ENCODE measurements at regions of chr4 and their contacts with region 1.

Region 1: DNA sequence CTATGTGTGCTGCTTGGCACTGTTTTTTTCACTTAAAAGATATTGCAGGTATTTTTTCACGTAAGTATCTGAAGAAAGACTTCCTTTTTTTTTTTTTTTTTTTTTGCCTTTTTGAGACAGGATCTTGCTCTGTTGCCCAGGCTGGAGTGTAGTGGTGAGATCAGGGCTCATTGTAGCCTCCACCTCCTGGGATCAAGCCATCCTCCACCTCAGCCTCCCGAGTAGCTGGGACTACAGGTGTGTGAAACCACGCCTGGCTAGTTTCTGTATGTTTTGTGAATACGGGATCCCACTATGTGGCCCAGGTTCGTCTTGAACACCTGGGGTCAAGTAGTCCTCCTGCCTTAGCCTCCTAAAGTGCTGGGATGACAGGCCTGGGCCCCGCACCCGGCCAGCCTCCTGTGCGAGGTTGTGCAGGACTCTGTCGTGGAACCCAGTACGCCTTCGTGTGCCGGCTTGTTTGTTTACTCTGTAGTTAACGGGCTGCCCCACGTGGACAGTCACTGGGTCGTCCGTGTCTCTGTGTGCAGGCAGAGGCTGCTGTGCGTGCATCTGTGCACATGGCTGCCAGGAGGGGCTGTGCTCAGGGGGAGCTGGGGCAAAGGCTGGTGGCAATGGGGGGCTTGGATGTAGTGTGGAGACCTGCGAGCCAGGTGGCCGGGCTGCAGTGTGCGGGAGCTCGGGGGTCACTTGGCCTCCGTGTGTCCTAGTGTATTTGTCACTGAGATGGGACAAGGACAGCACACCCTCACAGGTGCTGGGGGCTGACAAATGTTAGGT is 179.5 kb downstream of the ADRA2C start:
- DNase-seq: no peak
- ATAC-seq: no peak
- H3K4me3 ChIP-seq: no peak overlapping the region
- H3K27ac ChIP-seq: no peak overlapping the region
- H3K4me1 ChIP-seq: peaks cover 0 to 8% of the 10 kb centered on the region in 2 experiments; a peak in 2 of 5 replicates
- H3K27me3 ChIP-seq: no peaks in the 10 kb centered on the region
- CTCF ChIP-seq: no peak
- EP300 ChIP-seq: no peak
- POLR2A ChIP-seq: no peak
- RAD21 ChIP-seq: no peak

Region 2: GRCh38 chr4:3077796-3078195 is 867.9 kb before region 1 on chr4:
- CTCF ChIA-PET with region 1: no interaction called
- POLR2A ChIA-PET with region 1: no interaction called
- in situ Hi-C with region 1: no loop called
- intact Hi-C with region 1: no loop called
- DNase-seq: no peak
- ATAC-seq: no peak
- H3K4me3 ChIP-seq: no peak overlapping the region
- H3K27ac ChIP-seq: no peak overlapping the region
- H3K4me1 ChIP-seq: peaks cover 28 to 32% of the 10 kb centered on the region in 2 experiments
- H3K27me3 ChIP-seq: no peaks in the 10 kb centered on the region
- CTCF ChIP-seq: no peak
- EP300 ChIP-seq: no peak
- POLR2A ChIP-seq: no peak
- RAD21 ChIP-seq: no peak

Region 3: DNA sequence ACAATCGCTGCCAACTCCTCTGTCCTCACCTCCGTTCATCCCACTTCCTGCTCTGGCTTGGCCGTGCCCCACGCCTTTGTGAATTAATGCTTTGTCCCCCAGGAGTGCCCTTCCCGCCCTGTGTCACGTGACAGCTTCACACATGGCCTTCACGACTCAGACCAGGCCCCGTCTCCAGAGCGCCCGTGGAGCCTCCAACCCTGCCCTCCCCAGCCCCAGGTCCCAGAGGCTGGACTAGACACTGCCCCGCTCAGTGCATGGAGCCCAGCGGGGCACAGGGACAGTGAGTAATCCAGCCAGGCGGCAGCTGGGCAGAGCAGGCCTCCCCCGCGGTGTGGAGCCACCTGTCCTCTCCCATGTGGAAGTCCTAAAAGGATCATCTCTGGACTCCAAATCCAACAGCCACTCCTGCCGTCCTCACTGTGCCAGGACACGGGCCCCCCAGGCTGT is 172.1 kb before region 1 on chr4:
- CTCF ChIA-PET with region 1: no interaction called
- POLR2A ChIA-PET with region 1: no interaction called
- in situ Hi-C with region 1: loop called (anchors 10 kb)
- intact Hi-C with region 1: no loop called
- DNase-seq: no peak
- ATAC-seq: peak; percentile 16; the same call in 2 of the 3 replicates
- H3K4me3 ChIP-seq: no peak overlapping the region
- H3K27ac ChIP-seq: no peak overlapping the region
- H3K4me1 ChIP-seq: peaks cover 0 to 9% of the 10 kb centered on the region in 2 experiments; a peak in 2 of 5 replicates
- H3K27me3 ChIP-seq: peaks cover 29 to 70% of the 10 kb centered on the region in 2 experiments; a peak in 4 of 5 replicates
- CTCF ChIP-seq: no peak
- EP300 ChIP-seq: no peak
- POLR2A ChIP-seq: no peak
- RAD21 ChIP-seq: no peak